ENCODE measurements at regions of chr7 and their contacts with region 1.

Region 1: GRCh38 chr7:74569501-74570075 is 87.9 kb upstream of the GTF2I start:
- DNase-seq: peak; percentile 67
- H3K4me3 Mint-ChIP-seq: peak overlapping the region; percentile 36
- H3K27ac Mint-ChIP-seq: peak overlapping the region; percentile 11
- H3K4me1 Mint-ChIP-seq: peaks cover 4% of the 10 kb centered on the region
- H3K27me3 Mint-ChIP-seq: no peaks in the 10 kb centered on the region

Region 2: DNA sequence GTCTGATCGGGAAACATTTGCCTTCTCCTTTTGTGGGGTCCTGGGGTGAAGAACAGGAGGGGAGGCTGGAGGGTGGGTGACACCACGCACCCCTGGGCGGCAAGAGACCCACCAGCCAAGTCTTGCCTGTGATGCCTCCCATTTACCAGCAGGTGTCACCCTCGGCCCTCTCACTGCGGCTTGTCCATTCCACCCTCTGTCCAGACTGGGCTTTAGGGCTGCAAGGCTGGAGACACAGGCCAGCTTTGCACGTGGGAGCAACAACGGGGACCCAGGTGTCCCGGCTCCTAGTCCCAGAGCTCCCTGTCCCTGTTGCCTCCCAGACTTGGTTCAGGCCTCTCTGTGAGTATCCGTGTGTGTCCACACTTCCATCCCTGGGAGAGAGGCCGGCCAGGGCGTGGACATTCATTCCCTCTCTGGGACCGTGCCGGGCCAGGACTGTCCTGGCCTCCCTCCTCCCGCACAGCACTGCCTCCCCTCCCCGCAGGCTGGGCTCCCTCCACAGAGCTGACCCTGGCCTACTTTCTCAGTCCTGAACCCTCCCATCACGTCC is 152.1 kb before region 1 on chr7:
- intact Hi-C with region 1: loop called (anchors 2 kb)
- DNase-seq: peak; percentile 87
- H3K4me3 Mint-ChIP-seq: no peak overlapping the region
- H3K27ac Mint-ChIP-seq: no peak overlapping the region
- H3K4me1 Mint-ChIP-seq: no peaks in the 10 kb centered on the region
- H3K27me3 Mint-ChIP-seq: no peaks in the 10 kb centered on the region

Region 3: GRCh38 chr7:74449809-74450397 is 119.7 kb before region 1 on chr7:
- intact Hi-C with region 1: loop called (anchors 1 kb)
- DNase-seq: peak; percentile 91
- H3K4me3 Mint-ChIP-seq: no peak overlapping the region
- H3K27ac Mint-ChIP-seq: no peak overlapping the region
- H3K4me1 Mint-ChIP-seq: peaks cover 13% of the 10 kb centered on the region
- H3K27me3 Mint-ChIP-seq: peaks cover 15% of the 10 kb centered on the region

Region 4: DNA sequence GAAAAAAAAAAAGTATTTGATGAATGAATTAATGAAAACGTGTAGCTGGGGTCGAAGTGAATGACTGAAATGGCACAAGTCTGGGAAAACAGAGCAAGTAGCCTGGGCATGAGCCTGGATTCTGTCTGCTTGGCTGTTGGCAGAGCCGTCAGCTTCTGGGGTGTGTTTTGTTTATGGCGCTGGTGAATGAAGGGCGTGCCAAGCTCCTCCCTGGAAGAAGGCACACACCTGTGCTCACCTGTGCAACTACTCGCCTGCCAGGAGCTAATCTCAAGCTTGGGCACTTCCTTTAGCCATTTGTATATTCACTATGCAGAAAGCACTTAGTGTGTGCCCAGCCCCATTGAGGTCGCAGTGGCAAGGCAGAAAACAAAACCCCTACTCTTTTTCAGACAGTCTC is 41.7 kb before region 1 on chr7:
- intact Hi-C with region 1: no loop called
- DNase-seq: no peak
- H3K4me3 Mint-ChIP-seq: no peak overlapping the region
- H3K27ac Mint-ChIP-seq: no peak overlapping the region
- H3K4me1 Mint-ChIP-seq: no peaks in the 10 kb centered on the region
- H3K27me3 Mint-ChIP-seq: no peaks in the 10 kb centered on the region

Measured in activated CD4-positive, alpha-beta T cell treated with anti-CD3 and anti-CD28 coated beads, Interleukin-2, amount 10 ng/mL, durations not matched to agents 24 days and 14 days (primary cell).